PC-9 (cell line): ENCODE measurements at regions of chr7 and their contacts with region 1.

Region 1: GRCh38 chr7:55044791-55045190 is 26.0 kb downstream of the EGFR start:
- DNase-seq: no peak
- H3K4me3 ChIP-seq: no peak overlapping the region
- H3K27ac ChIP-seq: peak overlapping the region; percentile 45
- H3K4me1 ChIP-seq: peaks cover 60% of the 10 kb centered on the region
- H3K27me3 ChIP-seq: no peaks in the 10 kb centered on the region
- CTCF ChIP-seq: no peak

Region 2: DNA sequence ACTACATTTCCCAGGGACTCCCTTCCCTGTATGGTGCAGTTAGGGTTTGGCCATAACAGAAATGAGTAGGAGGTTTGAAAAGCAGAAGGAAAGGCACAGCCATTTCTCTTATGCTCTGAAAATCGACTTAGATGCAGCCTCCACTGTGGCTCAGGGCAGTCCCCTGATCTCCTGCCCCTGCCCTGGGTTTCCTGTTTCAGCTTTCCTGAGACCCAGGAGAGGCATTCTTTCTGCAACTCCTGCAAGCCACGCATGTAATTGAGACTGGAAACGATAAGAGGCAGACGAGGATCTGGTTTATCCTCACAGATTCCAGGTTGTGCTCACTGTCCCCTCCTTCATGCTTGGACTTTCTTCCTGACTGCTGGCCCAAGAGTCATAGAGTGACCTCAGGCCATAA is 963.8 kb before region 1 on chr7:
- CTCF ChIA-PET with region 1: no interaction called
- POLR2A ChIA-PET with region 1: no interaction called
- intact Hi-C with region 1: no loop called
- DNase-seq: no peak
- H3K4me3 ChIP-seq: no peak overlapping the region
- H3K27ac ChIP-seq: no peak overlapping the region
- H3K4me1 ChIP-seq: no peaks in the 10 kb centered on the region
- H3K27me3 ChIP-seq: peaks cover 18% of the 10 kb centered on the region
- CTCF ChIP-seq: no peak

Region 3: GRCh38 chr7:54932818-54933543 is 111.8 kb before region 1 on chr7:
- CTCF ChIA-PET with region 1: no interaction called
- POLR2A ChIA-PET with region 1: interaction called, 10 read pairs
- intact Hi-C with region 1: no loop called
- DNase-seq: peak; percentile 74 to 91
- H3K4me3 ChIP-seq: peak overlapping the region; percentile 60
- H3K27ac ChIP-seq: no peak overlapping the region
- H3K4me1 ChIP-seq: peaks cover 14% of the 10 kb centered on the region
- H3K27me3 ChIP-seq: no peaks in the 10 kb centered on the region
- CTCF ChIP-seq: no peak

Region 4: GRCh38 chr7:55026866-55027490 is 17.8 kb before region 1 on chr7:
- CTCF ChIA-PET with region 1: no interaction called
- POLR2A ChIA-PET with region 1: interaction called, 3 read pairs
- intact Hi-C with region 1: loop called (anchors 1 kb)
- DNase-seq: peak; percentile 71 to 92
- H3K4me3 ChIP-seq: 0 out of 2 replicates have a peak overlapping the region, but pooled peaks have one; percentile 0
- H3K27ac ChIP-seq: peak overlapping the region; percentile 66
- H3K4me1 ChIP-seq: peaks cover 85% of the 10 kb centered on the region
- H3K27me3 ChIP-seq: no peaks in the 10 kb centered on the region
- CTCF ChIP-seq: no peak